GM12878 (cell line): ENCODE measurements at regions of chr3 and their contacts with region 1.

Region 1: GRCh38 chr3:61226166-61226686 is 25.0 kb downstream of the FHIT start:
- DNase-seq: no peak
- ATAC-seq: no peak
- H3K4me3 ChIP-seq: no peak overlapping the region
- H3K27ac ChIP-seq: no peak overlapping the region
- H3K4me1 ChIP-seq: no peaks in the 10 kb centered on the region
- H3K27me3 ChIP-seq: no peaks in the 10 kb centered on the region
- CTCF ChIP-seq: no peak
- EP300 ChIP-seq: no peak
- POLR2A ChIP-seq: no peak
- RAD21 ChIP-seq: no peak

Region 2: GRCh38 chr3:61236556-61236955 is 10.3 kb after region 1 on chr3:
- CTCF ChIA-PET with region 1: interaction called, 3 read pairs
- POLR2A ChIA-PET with region 1: interaction called, 3 read pairs
- RAD21 ChIA-PET with region 1: no interaction called
- SMC1A ChIA-PET with region 1: interaction called, 11 read pairs
- in situ Hi-C with region 1: no loop called
- intact Hi-C with region 1: no loop called
- DNase-seq: peak; percentile 64
- ATAC-seq: peak; percentile 93
- H3K4me3 ChIP-seq: no peak overlapping the region
- H3K27ac ChIP-seq: peak overlapping the region; percentile 72
- H3K4me1 ChIP-seq: peaks cover 31% of the 10 kb centered on the region
- H3K27me3 ChIP-seq: no peaks in the 10 kb centered on the region
- CTCF ChIP-seq: no peak
- EP300 ChIP-seq: 0 out of 4 replicates have a peak, but pooled peaks have one; percentile 16 to 29
- POLR2A ChIP-seq: peak; percentile 64
- RAD21 ChIP-seq: no peak